A549 (cell line): ENCODE measurements at regions of chr9 and their contacts with region 1.

Region 1: DNA sequence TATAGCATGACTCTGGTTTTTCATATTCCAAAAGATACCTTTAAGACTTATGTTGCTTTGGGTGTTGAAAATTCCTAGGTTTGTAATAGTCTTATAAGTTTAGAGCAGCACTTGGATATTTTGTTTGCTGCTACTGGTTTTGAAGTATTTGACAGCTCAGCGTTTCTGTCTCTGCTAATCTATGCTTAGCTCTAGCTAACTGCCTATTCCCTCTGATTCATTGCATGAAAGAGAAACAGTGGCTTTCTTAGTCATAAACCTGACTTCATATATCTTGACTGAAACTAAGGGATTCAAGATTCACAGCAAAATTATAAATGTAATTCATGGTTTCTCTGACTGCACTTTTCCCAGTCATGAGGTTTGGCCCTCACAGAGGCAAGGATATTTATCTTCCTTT is 35.6 kb upstream of the ANXA1 start:
- DNase-seq: no peak
- ATAC-seq: peak in 1 of 2 experiments; percentile 51; a peak in 2 of 6 replicates
- H3K4me3 ChIP-seq: no peak overlapping the region
- H3K27ac ChIP-seq: peak overlapping the region; percentile 37 to 68; a peak in 5 of 6 replicates
- H3K4me1 ChIP-seq: peaks cover 59% of the 10 kb centered on the region
- CTCF ChIP-seq: no peak
- EP300 ChIP-seq: no peak
- POLR2A ChIP-seq: no peak
- RAD21 ChIP-seq: no peak

Region 2: DNA sequence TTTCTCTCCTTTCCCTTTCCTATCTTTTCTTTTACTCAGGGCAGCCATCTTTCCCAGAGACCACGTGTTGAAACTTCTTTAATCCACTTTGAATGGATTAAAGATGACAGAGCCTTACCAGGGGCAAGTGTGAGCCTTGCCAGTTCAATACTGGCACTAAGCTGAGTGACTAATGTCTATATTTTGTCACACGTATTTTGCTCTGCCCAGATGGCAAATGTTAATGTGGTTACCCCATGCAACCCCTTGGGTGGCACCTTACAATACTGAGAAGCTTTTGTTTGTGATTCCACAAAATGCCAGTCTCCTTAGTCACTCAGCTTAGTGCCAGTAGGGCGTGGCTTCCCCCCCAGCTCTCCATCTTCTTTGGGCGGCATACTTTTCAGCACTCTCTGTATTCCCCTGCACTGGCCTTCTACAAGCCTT is 60.4 kb after region 1 on chr9:
- CTCF ChIA-PET with region 1: interaction called, 34 read pairs
- POLR2A ChIA-PET with region 1: interaction called, 3 read pairs
- DNase-seq: peak; percentile 58 to 89
- ATAC-seq: peak; percentile 58 to 64
- H3K4me3 ChIP-seq: no peak overlapping the region
- H3K27ac ChIP-seq: peak overlapping the region; percentile 88
- H3K4me1 ChIP-seq: peaks cover 98% of the 10 kb centered on the region
- CTCF ChIP-seq: no peak
- EP300 ChIP-seq: peak; percentile 50 to 68; a peak in 3 of 5 replicates
- POLR2A ChIP-seq: no peak
- RAD21 ChIP-seq: no peak; a peak in 1 of 5 replicates